IMR-90 (cell line): ENCODE measurements at regions of chr5 and their contacts with region 1.

Region 1: GRCh38 chr5:133754575-133755169 is 142.3 kb upstream of the FSTL4 start:
- DNase-seq: peak; percentile 7
- ATAC-seq: no peak; the same call in 1 of the 2 replicates
- H3K4me3 ChIP-seq: no peak overlapping the region
- H3K27ac ChIP-seq: no peak overlapping the region
- H3K4me1 ChIP-seq: no peaks in the 10 kb centered on the region
- H3K27me3 ChIP-seq: peaks cover 5% of the 10 kb centered on the region
- CTCF ChIP-seq: peak; percentile 42
- POLR2A ChIP-seq: no peak
- RAD21 ChIP-seq: peak; percentile 32; the same call in 1 of the 2 replicates

Region 2: DNA sequence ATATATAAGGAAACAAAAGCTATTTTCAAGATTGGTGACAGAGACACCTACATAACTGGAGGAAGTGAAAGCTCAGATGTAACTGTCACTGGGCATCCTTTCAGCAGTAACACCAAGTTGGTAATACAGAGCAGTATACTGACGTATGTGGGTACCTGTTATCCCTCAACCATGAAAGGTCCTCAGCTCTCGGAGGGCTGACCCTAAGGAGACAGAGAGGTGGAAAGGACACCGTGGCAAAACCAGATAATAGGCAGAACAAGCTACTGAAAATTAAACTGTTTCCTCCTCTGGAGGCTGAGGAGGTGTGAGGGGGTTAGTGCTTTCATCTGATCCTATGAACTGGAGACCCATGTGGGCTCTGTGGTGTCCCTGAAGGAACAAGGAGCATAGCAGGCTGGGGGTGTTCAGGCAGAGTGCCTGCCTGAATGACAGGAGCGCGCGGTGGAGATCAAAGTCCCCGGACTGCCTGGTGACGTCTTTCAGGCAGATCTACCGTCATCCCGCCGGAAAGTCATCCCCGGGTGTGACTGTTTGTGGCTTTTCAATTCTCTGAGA is 12.2 kb before region 1 on chr5:
- CTCF ChIA-PET with region 1: no interaction called
- POLR2A ChIA-PET with region 1: no interaction called
- dilution Hi-C with region 1: no loop called
- in situ Hi-C with region 1: no loop called
- intact Hi-C with region 1: no loop called
- DNase-seq: no peak
- ATAC-seq: no peak
- H3K4me3 ChIP-seq: no peak overlapping the region
- H3K27ac ChIP-seq: no peak overlapping the region
- H3K4me1 ChIP-seq: no peaks in the 10 kb centered on the region
- H3K27me3 ChIP-seq: peaks cover 2% of the 10 kb centered on the region; the same call in 1 of the 2 replicates
- CTCF ChIP-seq: no peak
- POLR2A ChIP-seq: no peak
- RAD21 ChIP-seq: no peak

Region 3: GRCh38 chr5:133863857-133864585 is 109.3 kb after region 1 on chr5:
- CTCF ChIA-PET with region 1: no interaction called
- POLR2A ChIA-PET with region 1: no interaction called
- dilution Hi-C with region 1: no loop called
- in situ Hi-C with region 1: no loop called
- intact Hi-C with region 1: loop called (anchors 1 kb)
- DNase-seq: no peak
- ATAC-seq: no peak
- H3K4me3 ChIP-seq: no peak overlapping the region
- H3K27ac ChIP-seq: no peak overlapping the region
- H3K4me1 ChIP-seq: no peaks in the 10 kb centered on the region
- H3K27me3 ChIP-seq: peaks cover 26% of the 10 kb centered on the region
- CTCF ChIP-seq: no peak
- POLR2A ChIP-seq: no peak
- RAD21 ChIP-seq: no peak